CD8-positive, alpha-beta memory T cell (primary cell): ENCODE measurements at regions of chr11 and their contacts with region 1.

Region 1: GRCh38 chr11:130069684-130070108 is at the start of gene APLP2:
- DNase-seq: peak; percentile 95 to 99 (median 97)
- H3K4me3 ChIP-seq: peak within 1 kb of the TSS; percentile 68
- H3K4me3 Mint-ChIP-seq: peak within 1 kb of the TSS; percentile 93 to 99 (median 96)
- H3K27ac ChIP-seq: peak within 1 kb of the TSS; percentile 74
- H3K27ac Mint-ChIP-seq: peak within 1 kb of the TSS; percentile 92 to 98 (median 96)
- H3K4me1 ChIP-seq: peaks cover 16% of the 10 kb centered on the region
- H3K4me1 Mint-ChIP-seq: peaks cover 19 to 27% (median 22%) of the 10 kb centered on the region in 3 donors
- H3K27me3 ChIP-seq: no peaks in the 10 kb centered on the region
- H3K27me3 Mint-ChIP-seq: peaks cover 4 to 6% of the 10 kb centered on the region in 2 donors
- total RNA-seq, gene APLP2: 58.5 to 60.1 TPM

Region 2: GRCh38 chr11:130002846-130003716 is 66.6 kb before region 1 on chr11:
- CTCF ChIA-PET with region 1: interaction called, 20 read pairs
- POLR2A ChIA-PET with region 1: interaction called, 48 read pairs
- DNase-seq: peak; percentile 81 to 96 (median 95)
- H3K4me3 ChIP-seq: peak overlapping the region; percentile 87
- H3K4me3 Mint-ChIP-seq: peak overlapping the region; percentile 93 to 100 (median 99)
- H3K27ac ChIP-seq: peak overlapping the region; percentile 99
- H3K27ac Mint-ChIP-seq: peak overlapping the region; percentile 98 to 100 (median 100)
- H3K4me1 ChIP-seq: peaks cover 20% of the 10 kb centered on the region
- H3K4me1 Mint-ChIP-seq: peaks cover 33 to 46% (median 40%) of the 10 kb centered on the region in 3 donors
- H3K27me3 ChIP-seq: no peaks in the 10 kb centered on the region
- H3K27me3 Mint-ChIP-seq: no peaks in the 10 kb centered on the region

Region 3: DNA sequence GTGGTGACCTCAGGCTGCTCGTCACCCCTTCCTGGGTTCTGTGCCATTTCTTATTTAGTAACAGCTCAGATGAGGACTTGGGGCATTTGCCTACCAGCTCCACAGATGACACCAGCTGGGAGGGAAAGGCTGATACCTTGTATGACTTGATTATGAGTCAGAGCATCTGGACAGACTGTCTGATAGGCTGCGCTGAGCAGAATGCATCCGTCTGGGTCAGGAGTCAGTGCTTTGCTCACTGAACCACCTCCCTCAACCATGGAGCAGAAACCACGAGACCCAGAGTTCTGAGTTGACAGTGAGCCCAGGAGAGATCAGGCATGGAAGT is 96.7 kb after region 1 on chr11:
- CTCF ChIA-PET with region 1: no interaction called
- POLR2A ChIA-PET with region 1: no interaction called
- DNase-seq: no peak
- H3K4me3 ChIP-seq: no peak overlapping the region
- H3K4me3 Mint-ChIP-seq: no peak overlapping the region
- H3K27ac ChIP-seq: no peak overlapping the region
- H3K27ac Mint-ChIP-seq: no peak overlapping the region
- H3K4me1 ChIP-seq: no peaks in the 10 kb centered on the region
- H3K4me1 Mint-ChIP-seq: peaks cover 0 to 3% (median 0%) of the 10 kb centered on the region in 3 donors
- H3K27me3 ChIP-seq: peaks cover 4% of the 10 kb centered on the region
- H3K27me3 Mint-ChIP-seq: peaks cover 24 to 73% of the 10 kb centered on the region in 2 donors

Region 4: GRCh38 chr11:130189492-130190210 is 120.0 kb after region 1 on chr11:
- CTCF ChIA-PET with region 1: no interaction called
- POLR2A ChIA-PET with region 1: no interaction called
- DNase-seq: peak in 1 of 5 donors; percentile 34
- H3K4me3 ChIP-seq: no peak overlapping the region
- H3K4me3 Mint-ChIP-seq: no peak overlapping the region
- H3K27ac ChIP-seq: no peak overlapping the region
- H3K27ac Mint-ChIP-seq: no peak overlapping the region
- H3K4me1 ChIP-seq: no peaks in the 10 kb centered on the region
- H3K4me1 Mint-ChIP-seq: peaks cover 0 to 2% (median 0%) of the 10 kb centered on the region in 3 donors
- H3K27me3 ChIP-seq: no peaks in the 10 kb centered on the region
- H3K27me3 Mint-ChIP-seq: peaks cover 2 to 10% of the 10 kb centered on the region in 2 donors